Vagina (tissue), 2 donors: ENCODE measurements at regions of chr9 and their contacts with region 1.

Region 1: DNA sequence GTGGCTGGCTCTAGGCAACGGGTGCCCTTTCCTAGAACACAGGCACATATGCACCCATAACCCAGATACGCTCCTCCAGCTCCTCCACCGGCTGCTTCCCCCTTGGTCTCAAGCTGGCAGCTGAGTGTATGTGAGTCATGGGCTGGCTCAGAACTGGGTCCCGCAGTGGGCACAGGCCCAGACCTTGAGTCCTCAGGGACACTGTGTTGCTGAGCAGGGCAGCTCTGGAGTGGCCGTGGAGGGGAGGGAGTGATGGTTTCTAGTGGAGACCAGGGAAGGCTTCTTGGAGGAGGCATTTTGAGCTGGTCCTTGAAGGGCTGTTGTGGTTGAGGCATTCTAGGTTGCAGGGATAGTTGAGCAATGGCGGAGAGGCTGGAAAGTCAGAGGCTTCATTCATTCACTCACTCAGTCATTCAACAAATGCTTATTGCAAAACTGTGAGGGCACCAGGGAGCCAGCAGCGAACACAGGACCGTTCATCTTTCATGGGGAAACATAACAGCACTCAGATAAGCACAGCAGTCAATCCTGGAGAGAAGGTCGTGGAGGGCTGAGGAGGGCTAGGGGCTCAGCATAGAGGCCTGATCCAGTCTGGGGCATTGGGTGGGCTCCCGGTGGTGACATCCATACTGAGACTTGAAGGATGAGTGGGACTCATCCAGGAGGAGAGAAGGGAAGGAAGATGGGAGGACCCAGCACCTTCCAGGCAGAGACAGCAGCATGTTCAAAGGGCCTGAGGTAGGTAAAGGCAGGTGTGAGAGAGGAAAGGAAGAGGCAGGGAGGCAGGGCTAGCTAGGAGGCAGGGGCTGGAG is 2.4 kb downstream of the BBLN start:
- DNase-seq: no peak
- H3K4me3 ChIP-seq: no peak overlapping the region
- H3K27ac ChIP-seq: no peak overlapping the region
- H3K4me1 ChIP-seq: peaks cover 27% of the 10 kb centered on the region
- H3K27me3 ChIP-seq: no peaks in the 10 kb centered on the region
- CTCF ChIP-seq: no peak
- POLR2A ChIP-seq: no peak

Region 2: DNA sequence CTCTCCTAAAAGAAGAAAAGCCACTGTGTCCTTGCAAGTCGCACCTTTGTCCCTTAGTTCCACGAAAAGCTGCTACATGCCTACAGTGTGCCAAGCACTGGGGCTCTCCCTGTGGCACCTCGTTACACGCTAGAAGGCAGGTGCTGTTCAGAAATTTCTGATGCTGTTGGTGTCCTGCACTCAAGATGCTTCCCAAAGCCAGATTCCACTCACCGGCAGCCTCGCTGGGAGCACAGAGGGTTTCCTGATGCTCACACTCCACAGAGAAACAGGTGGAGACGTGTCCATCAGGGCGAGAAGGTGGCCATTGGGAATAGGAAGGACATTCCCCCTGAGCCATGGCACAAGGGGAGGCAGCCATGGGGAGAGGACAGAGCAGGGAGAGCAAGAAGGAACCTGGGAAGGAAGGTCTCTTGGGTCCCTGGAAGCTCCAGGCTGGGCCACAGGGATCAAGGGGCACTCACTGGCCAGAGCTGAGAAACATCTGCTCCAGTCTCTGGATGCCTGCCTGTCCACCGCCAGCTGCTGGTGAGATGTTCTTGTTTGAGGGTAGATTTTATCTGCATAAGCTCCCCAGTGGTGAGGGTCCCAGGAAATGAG is 31.0 kb before region 1 on chr9:
- intact Hi-C with region 1: loop called (anchors 2 kb)
- DNase-seq: no peak
- H3K4me3 ChIP-seq: no peak overlapping the region
- H3K27ac ChIP-seq: no peak overlapping the region
- H3K4me1 ChIP-seq: peaks cover 16% of the 10 kb centered on the region
- H3K27me3 ChIP-seq: no peaks in the 10 kb centered on the region
- CTCF ChIP-seq: no peak
- POLR2A ChIP-seq: no peak